HEK293T (cell line): ENCODE measurements at regions of chr3 and their contacts with region 1.

Region 1: GRCh38 chr3:112111785-112112402 is 21.2 kb downstream of the GCSAM start:
- DNase-seq: peak; percentile 74

Region 2: GRCh38 chr3:112032098-112032731 is 79.7 kb before region 1 on chr3:
- CTCF ChIA-PET with region 1: no interaction called
- POLR2A ChIA-PET with region 1: no interaction called
- DNase-seq: no peak

Region 3: DNA sequence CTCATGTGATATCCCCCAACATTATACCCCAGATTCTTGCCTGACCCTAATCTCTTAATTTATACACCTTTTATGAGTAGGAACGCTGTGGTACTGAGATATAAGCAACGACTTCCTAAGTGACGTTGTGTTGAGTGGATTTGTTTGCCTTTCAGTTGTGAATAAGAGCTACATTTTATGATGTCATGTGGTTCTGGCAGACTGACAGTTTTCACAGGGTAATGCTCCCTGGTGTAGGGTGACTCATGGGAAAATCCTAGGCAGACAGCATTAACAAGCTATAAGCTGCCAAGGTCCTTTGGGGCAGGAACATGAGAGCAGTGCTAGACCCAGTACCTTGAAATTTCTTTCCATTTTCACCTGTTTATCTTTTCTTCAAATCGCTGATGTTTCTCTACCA is 14.5 kb before region 1 on chr3:
- CTCF ChIA-PET with region 1: interaction called, 16 read pairs
- POLR2A ChIA-PET with region 1: no interaction called
- DNase-seq: peak; percentile 50